ENCODE measurements at regions of chr21 and their contacts with region 1.

Region 1: GRCh38 chr21:31873696-31874599 is 1.1 kb downstream of the HUNK start:
- DNase-seq: peak; percentile 91
- H3K4me3 ChIP-seq: peak overlapping the region; percentile 55 to 75; a peak in 3 of 4 replicates
- H3K27ac ChIP-seq: peak overlapping the region in 1 of 2 experiments; percentile 34; a peak in 1 of 4 replicates
- H3K4me1 ChIP-seq: peaks cover 0 to 20% of the 10 kb centered on the region in 2 experiments; a peak in 1 of 4 replicates
- H3K27me3 ChIP-seq: peaks cover 5% of the 10 kb centered on the region
- CTCF ChIP-seq: peak; percentile 61
- EP300 ChIP-seq: no peak
- RAD21 ChIP-seq: peak; percentile 39; the same call in 1 of the 2 replicates

Region 2: GRCh38 chr21:31833111-31833510 is 40.8 kb before region 1 on chr21:
- CTCF ChIA-PET with region 1: no interaction called
- POLR2A ChIA-PET with region 1: no interaction called
- DNase-seq: no peak
- H3K4me3 ChIP-seq: no peak overlapping the region
- H3K27ac ChIP-seq: no peak overlapping the region
- H3K4me1 ChIP-seq: no peaks in the 10 kb centered on the region
- H3K27me3 ChIP-seq: no peaks in the 10 kb centered on the region
- CTCF ChIP-seq: no peak
- EP300 ChIP-seq: no peak
- RAD21 ChIP-seq: no peak

Region 3: GRCh38 chr21:31945546-31945945 is 71.6 kb after region 1 on chr21:
- CTCF ChIA-PET with region 1: interaction called, 13 read pairs
- POLR2A ChIA-PET with region 1: no interaction called
- DNase-seq: no peak
- H3K4me3 ChIP-seq: no peak overlapping the region
- H3K27ac ChIP-seq: peak overlapping the region in 1 of 2 experiments; percentile 77; a peak in 2 of 4 replicates
- H3K4me1 ChIP-seq: peaks cover 8 to 9% of the 10 kb centered on the region in 2 experiments; a peak in 1 of 4 replicates
- H3K27me3 ChIP-seq: no peaks in the 10 kb centered on the region
- CTCF ChIP-seq: no peak
- EP300 ChIP-seq: no peak
- RAD21 ChIP-seq: no peak